ENCODE measurements at regions of chr19 and their contacts with region 1.

Region 1: DNA sequence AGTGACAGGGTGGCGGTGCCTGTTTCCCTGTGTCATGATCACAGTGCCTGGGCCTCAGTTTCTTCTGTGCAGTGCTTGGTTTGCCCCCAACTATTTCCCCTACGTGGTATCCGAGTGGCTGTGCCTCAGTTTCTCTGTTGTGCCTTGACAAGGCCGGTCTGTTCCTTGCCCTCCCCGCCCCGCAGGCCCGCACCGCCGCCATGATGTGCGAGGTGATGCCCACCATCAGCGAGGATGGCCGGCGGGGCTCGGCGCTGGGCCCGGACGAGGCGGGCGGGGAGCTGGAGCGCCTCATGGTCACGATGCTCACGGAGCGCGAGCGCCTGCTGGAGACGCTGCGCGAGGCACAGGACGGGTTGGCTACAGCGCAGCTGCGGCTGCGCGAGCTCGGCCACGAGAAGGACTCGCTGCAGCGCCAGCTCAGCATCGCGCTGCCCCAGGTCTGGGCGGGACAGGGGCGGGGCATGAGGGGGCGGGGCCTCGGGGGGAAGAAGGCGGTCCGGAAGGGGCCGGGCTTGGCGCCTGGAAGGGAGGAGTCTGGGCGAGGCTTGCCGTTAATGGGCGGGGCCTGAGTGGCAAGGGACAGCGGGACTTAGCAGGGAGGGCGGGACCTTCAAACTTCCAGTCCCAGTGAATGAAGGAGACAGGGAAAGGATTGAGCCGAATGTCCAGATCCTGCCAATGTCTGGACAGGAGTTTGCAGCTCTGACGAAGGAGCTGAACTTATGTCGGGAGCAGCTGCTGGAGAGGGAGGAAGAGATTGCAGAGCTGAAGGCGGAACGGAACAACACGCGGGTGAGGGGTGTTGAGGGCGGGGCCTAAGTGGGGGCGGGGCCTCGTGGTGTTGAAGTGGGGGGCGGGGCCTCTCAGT is 8.6 kb downstream of the PPFIA3 start:
- DNase-seq: peak in 1 of 2 experiments; percentile 97
- H3K4me3 ChIP-seq: peak overlapping the region; percentile 56 to 74 (median 66)
- H3K27ac ChIP-seq: peak overlapping the region; percentile 48; the same call in 1 of the 2 replicates
- H3K4me1 ChIP-seq: peaks cover 4 to 19% (median 8%) of the 10 kb centered on the region in 4 experiments
- H3K27me3 ChIP-seq: no peaks in the 10 kb centered on the region; a peak in 2 of 7 replicates
- CTCF ChIP-seq: peak in 1 of 3 experiments; percentile 1; a peak in 1 of 4 replicates
- EP300 ChIP-seq: no peak
- POLR2A ChIP-seq: peak in 1 of 2 experiments; percentile 69; a peak in 2 of 3 replicates
- RAD21 ChIP-seq: no peak

Region 2: GRCh38 chr19:49085020-49085867 is 42.7 kb before region 1 on chr19 and contains the start of gene SNRNP70:
- CTCF ChIA-PET with region 1: no interaction called
- POLR2A ChIA-PET with region 1: no interaction called
- DNase-seq: peak; percentile 98 to 99
- H3K4me3 ChIP-seq: peak within 1 kb of the TSS; percentile 84 to 97 (median 90)
- H3K27ac ChIP-seq: peak within 1 kb of the TSS; percentile 94
- H3K4me1 ChIP-seq: peaks cover 4 to 6% (median 5%) of the 10 kb centered on the region in 4 experiments
- H3K27me3 ChIP-seq: peaks cover 0 to 3% (median 0%) of the 10 kb centered on the region in 4 experiments; a peak in 1 of 7 replicates
- CTCF ChIP-seq: 0 out of 4 replicates have a peak, but pooled peaks of 1 of the 3 experiments have one; percentile 3
- EP300 ChIP-seq: no peak; a peak in 1 of 3 replicates
- POLR2A ChIP-seq: peak; percentile 97 to 98
- RAD21 ChIP-seq: no peak
- total RNA-seq, gene SNRNP70: 231 and 244 TPM in 2 replicates

Region 3: GRCh38 chr19:49142866-49143335 is 15.0 kb after region 1 on chr19:
- CTCF ChIA-PET with region 1: interaction called, 99 read pairs
- POLR2A ChIA-PET with region 1: interaction called, 47 read pairs
- DNase-seq: peak in 1 of 2 experiments; percentile 90
- H3K4me3 ChIP-seq: peak overlapping the region; percentile 59 to 73 (median 64)
- H3K27ac ChIP-seq: no peak overlapping the region
- H3K4me1 ChIP-seq: peaks cover 0 to 12% (median 3%) of the 10 kb centered on the region in 4 experiments; a peak in 4 of 7 replicates
- H3K27me3 ChIP-seq: no peaks in the 10 kb centered on the region
- CTCF ChIP-seq: no peak
- EP300 ChIP-seq: no peak
- POLR2A ChIP-seq: no peak
- RAD21 ChIP-seq: no peak

Measured in H1 (cell line).